Adrenal gland (tissue), 19 donors: ENCODE measurements at regions of chr15 and their contacts with region 1.

Region 1: DNA sequence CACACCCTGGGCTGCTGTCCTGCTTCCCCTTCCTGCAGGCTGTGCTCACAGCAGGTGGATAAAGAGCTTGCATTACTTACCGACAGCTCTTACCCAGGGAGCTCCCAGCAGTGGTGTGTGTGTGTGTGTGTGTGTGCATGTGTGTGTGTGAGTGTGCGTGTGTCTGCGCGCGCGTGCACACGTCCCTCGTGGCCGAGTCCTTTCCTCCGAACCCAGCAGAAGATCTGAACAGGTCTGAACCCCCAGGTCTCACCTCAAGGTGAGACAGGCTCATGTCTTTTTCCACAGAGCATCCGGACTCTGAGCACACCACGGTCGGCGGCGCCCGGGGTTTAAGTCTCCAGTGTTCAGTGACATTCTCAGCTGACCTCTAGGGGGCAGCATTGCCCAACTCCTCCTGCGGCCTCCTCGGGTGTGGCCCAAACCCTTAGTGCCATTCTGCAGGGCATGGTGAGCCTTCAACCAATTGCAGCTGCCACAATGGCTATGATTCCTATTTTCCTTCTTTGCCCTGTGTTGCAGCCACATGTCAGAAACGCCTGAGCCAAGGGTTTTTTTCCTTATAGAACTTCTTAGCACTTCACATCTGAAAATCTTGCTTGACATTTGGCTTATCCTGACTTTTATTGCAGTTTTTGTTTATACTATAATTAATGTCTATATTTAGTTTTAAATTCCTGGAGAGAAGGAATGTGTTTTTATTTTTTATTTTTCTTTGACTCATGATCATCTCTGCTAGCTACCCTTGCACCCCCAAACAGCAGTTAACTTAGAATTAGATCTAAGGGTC is 64.1 kb upstream of the KLHL25 start:
- DNase-seq: peak; percentile 63 to 82 (median 74)
- H3K4me3 ChIP-seq: no peak overlapping the region
- H3K27ac ChIP-seq: no peak overlapping the region
- H3K4me1 ChIP-seq: no peaks in the 10 kb centered on the region
- H3K27me3 ChIP-seq: peaks cover 12% of the 10 kb centered on the region
- CTCF ChIP-seq: peak; percentile 50 to 79 (median 66)
- POLR2A ChIP-seq: no peak

Region 2: DNA sequence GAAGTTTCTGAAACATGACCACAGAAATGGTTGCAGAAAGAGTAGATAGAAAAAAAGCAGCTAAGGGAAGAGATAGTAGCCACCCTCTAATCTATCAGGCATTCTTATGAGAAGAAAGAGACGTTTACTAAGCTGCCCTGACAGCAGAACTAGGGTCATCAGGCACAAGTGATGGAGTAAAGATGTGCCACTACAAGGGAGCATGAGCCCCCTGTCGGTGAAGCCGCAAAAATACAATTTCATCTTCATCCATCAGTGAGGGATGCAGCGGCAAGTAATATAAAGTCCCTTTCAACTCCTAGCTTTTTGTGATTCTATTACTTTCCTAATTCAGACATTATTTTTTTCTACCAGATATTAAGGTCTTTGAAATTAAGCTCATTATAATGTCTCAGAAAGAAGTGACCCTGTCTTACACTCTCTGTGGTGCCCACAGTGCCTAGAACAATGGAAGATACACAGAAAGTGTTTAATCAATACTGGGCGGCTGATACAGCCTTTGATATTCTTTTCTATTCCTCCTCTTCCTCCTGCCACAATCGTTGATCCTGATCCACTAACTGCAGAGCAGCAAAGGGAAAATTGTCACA is 1746.2 kb after region 1 on chr15:
- intact Hi-C with region 1: loop called in 1 of 2 experiments (anchors 10 kb)
- DNase-seq: peak in 2 of 7 donors; percentile 26 to 28
- H3K4me3 ChIP-seq: no peak overlapping the region
- H3K27ac ChIP-seq: no peak overlapping the region
- H3K4me1 ChIP-seq: no peaks in the 10 kb centered on the region
- H3K27me3 ChIP-seq: no peaks in the 10 kb centered on the region
- CTCF ChIP-seq: peak; percentile 30 to 54 (median 43)
- POLR2A ChIP-seq: no peak